ENCODE measurements at regions of chr2 and their contacts with region 1.

Region 1: GRCh38 chr2:233976690-233977294 is 59.6 kb downstream of the TRPM8 start:
- DNase-seq: peak; percentile 75
- H3K4me3 ChIP-seq: no peak overlapping the region
- H3K27ac ChIP-seq: no peak overlapping the region
- H3K4me1 ChIP-seq: peaks cover 34% of the 10 kb centered on the region
- H3K27me3 ChIP-seq: no peaks in the 10 kb centered on the region

Region 2: GRCh38 chr2:234164493-234165413 is 188.0 kb after region 1 on chr2:
- in situ Hi-C with region 1: no loop called
- DNase-seq: no peak
- H3K4me3 ChIP-seq: no peak overlapping the region
- H3K27ac ChIP-seq: no peak overlapping the region
- H3K4me1 ChIP-seq: no peaks in the 10 kb centered on the region
- H3K27me3 ChIP-seq: 0 out of 2 replicates have a peak, but pooled peaks cover 4% of the 10 kb centered on the region

Region 3: GRCh38 chr2:235106874-235107639 is 1130.3 kb after region 1 on chr2:
- in situ Hi-C with region 1: loop called (anchors 25 kb)
- DNase-seq: peak; percentile 81
- H3K4me3 ChIP-seq: no peak overlapping the region
- H3K27ac ChIP-seq: no peak overlapping the region
- H3K4me1 ChIP-seq: peaks cover 3% of the 10 kb centered on the region; the same call in 1 of the 2 replicates
- H3K27me3 ChIP-seq: no peaks in the 10 kb centered on the region